ENCODE measurements at regions of chr9 and their contacts with region 1.

Region 1: DNA sequence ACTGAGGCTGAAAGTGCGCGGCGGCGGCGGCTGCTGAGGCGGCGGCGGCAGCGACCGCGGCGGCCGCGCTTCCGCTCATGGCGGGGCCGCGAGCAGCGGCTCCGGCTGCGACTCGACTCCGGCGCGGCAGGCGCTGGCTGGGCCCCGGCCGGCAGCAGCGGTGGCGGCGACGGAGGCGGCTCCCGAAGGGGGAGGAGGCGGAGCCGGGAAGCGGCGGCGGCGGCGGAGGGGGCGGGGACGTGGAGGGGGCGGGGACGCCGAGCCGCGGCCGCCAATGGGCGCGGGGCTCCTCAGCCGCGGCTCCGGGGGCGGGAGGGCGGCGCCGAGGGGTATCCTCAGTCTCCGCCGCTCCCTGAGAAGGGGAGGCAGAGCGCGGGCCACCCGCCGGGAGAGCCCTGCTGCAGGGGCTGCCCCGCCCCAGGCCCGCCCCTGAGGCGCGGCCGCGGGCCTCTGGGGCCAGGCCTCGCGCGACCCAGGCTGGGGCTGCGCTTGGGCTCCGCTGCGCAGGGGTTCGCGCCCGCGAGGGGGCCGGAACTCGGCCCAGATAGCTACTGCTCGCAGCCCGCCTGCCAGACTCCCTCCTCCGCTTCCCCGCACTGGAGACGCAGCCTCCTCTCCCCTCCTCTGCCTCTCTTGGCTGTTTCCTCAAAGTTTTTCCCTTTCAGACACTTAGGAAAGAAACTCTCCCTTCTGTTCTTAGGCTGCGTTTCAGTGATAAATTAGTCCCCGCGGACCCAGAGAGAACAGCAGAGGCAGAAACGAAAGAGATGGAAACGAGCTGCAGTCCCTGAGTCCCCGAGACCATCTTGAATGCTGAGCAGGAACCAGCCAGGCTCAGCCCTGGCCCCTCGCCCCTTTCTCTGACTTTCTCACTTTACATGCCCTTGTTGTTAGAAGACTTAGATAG is 85.0 kb upstream of the MELK start:
- DNase-seq: peak; percentile 95
- ATAC-seq: peak; percentile 93
- H3K4me3 Mint-ChIP-seq: peak overlapping the region; percentile 93
- H3K27ac Mint-ChIP-seq: peak overlapping the region; percentile 99
- H3K4me1 Mint-ChIP-seq: peaks cover 63% of the 10 kb centered on the region
- H3K27me3 Mint-ChIP-seq: no peaks in the 10 kb centered on the region

Region 2: GRCh38 chr9:34522971-34523797 is 1964.6 kb before region 1 on chr9 and contains the start of gene ENHO:
- CTCF ChIA-PET with region 1: no interaction called
- POLR2A ChIA-PET with region 1: no interaction called
- intact Hi-C with region 1: loop called in 1 of 2 experiments (anchors 5 kb)
- DNase-seq: peak; percentile 93
- ATAC-seq: peak; percentile 99
- H3K4me3 Mint-ChIP-seq: peak within 1 kb of the TSS; percentile 54
- H3K27ac Mint-ChIP-seq: no peak within 1 kb of the TSS
- H3K4me1 Mint-ChIP-seq: peaks cover 24% of the 10 kb centered on the region
- H3K27me3 Mint-ChIP-seq: peaks cover 11% of the 10 kb centered on the region
- total RNA-seq, gene ENHO: not detected

Region 3: DNA sequence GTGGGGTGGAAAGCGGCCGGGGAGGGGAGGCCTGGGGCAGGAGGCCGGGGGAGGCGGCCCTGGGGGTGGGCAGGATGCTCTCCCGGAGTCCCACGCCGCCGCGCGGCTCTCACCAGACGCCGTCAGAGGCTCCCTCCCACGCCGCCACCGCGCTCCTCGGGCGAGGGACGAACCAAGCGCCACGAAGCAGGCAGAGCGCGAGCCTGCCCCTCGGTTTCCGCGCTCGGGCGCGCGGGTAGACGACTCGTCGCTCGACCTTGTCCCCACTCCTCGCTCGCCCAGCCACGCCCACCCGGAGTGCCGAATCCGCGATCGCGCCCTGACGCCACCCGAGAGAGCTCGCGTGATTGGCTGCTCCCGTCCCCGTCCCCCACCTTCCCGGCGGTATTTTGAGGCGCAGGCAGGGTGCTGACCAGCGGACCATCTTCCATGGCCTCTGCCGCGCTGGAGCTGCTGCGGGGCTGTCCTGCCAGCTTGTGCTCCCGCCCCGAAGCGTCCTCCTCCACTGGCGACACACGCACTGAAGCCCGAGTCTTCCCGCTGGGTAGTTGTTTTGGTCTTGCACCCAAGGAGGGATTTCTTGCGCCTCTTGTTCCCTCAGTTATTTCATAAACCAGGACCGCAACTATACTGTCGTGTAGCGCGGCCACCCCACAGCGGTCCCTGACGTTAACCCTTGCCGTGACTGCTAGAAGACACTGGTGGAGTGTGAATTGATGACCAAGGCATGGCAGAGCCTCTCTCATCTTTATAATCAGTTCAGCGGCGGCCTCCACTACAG is 229.3 kb before region 1 on chr9 and contains the start of gene GNE:
- CTCF ChIA-PET with region 1: no interaction called
- POLR2A ChIA-PET with region 1: no interaction called
- intact Hi-C with region 1: loop called in 1 of 2 experiments (anchors 1 kb)
- DNase-seq: peak; percentile 99
- ATAC-seq: peak; percentile 85
- H3K4me3 Mint-ChIP-seq: peak within 1 kb of the TSS; percentile 91
- H3K27ac Mint-ChIP-seq: peak within 1 kb of the TSS; percentile 90
- H3K4me1 Mint-ChIP-seq: peaks cover 8% of the 10 kb centered on the region
- H3K27me3 Mint-ChIP-seq: no peaks in the 10 kb centered on the region
- total RNA-seq, gene GNE: 17.0 to 19.0 TPM

Region 4: DNA sequence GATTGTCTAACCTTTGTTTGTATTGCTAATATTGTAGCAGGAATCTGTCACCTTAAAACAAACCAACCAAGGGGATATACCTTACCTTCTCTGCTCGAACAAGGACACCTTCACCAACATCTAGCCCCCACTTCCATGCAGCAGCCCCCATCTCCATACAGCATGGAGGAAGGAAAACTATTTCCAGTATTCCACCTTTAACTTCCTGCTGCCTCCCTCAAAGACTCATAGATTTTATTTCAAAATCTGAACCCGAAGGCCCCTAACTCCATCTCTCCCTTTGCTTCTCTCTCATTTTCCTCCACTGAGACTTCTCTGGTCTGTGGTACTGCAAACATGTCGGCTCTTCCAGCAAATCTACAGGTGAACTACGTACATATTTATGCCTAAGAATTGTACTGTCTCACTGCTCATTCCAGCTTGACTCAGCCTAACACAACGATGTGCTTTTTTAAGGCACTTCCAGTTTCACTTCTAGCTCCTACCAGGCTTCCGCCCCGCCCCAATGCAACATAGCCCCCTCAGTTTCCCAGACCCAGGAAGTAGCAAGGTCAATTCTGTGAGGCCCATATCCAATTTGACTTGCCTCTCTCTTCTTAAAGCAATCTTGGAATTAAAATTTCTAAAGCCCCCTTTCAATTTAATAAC is 17.0 kb before region 1 on chr9:
- CTCF ChIA-PET with region 1: interaction called, 7 read pairs
- POLR2A ChIA-PET with region 1: interaction called, 14 read pairs
- intact Hi-C with region 1: loop called (anchors 1 kb)
- DNase-seq: peak; percentile 78
- ATAC-seq: peak; percentile 97
- H3K4me3 Mint-ChIP-seq: peak overlapping the region; percentile 72
- H3K27ac Mint-ChIP-seq: peak overlapping the region; percentile 97
- H3K4me1 Mint-ChIP-seq: peaks cover 31% of the 10 kb centered on the region
- H3K27me3 Mint-ChIP-seq: no peaks in the 10 kb centered on the region

Region 5: GRCh38 chr9:36765468-36766341 is 278.0 kb after region 1 on chr9:
- CTCF ChIA-PET with region 1: no interaction called
- POLR2A ChIA-PET with region 1: no interaction called
- intact Hi-C with region 1: loop called in 1 of 2 experiments (anchors 1 kb)
- DNase-seq: peak; percentile 95
- ATAC-seq: peak; percentile 99
- H3K4me3 Mint-ChIP-seq: no peak overlapping the region
- H3K27ac Mint-ChIP-seq: peak overlapping the region; percentile 16
- H3K4me1 Mint-ChIP-seq: peaks cover 2% of the 10 kb centered on the region
- H3K27me3 Mint-ChIP-seq: peaks cover 6% of the 10 kb centered on the region

Measured in activated CD4-positive, alpha-beta T cell treated with anti-CD3 and anti-CD28 coated beads for 36 hours (primary cell).